Activated naive CD4-positive, alpha-beta T cell treated with anti-CD3 and anti-CD28 coated beads, Interleukin-2, amount 10 ng/mL, durations not matched to agents 7 days and 5 days (primary cell): ENCODE measurements at regions of chr9 and their contacts with region 1.

Region 1: DNA sequence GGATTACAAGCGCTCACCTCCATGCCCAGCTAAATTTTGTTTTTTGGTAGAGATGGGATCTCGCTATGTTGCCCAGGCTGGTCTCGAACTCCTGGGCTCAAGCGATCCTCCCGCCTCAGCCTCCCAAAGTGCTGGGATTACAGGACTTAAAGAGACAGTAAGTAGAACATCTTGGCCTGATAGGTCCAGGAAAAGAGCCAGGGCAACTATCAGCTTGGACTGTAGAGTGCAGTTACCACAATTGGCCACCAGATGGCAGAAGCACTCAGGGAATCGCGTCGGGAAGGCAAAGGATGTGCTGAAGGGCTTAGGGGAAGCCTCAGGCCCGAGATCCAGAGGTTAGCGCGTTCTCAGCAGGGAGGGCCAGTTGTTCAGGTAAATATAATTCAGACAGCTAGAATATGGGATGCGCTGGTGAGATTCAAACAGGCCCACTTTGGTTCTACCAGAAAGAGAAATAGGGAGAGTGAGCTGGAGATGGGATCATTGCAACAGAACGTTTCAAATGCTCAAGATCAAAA is 21.5 kb downstream of the C9orf57 start:
- DNase-seq: peak; percentile 72
- H3K4me3 Mint-ChIP-seq: no peak overlapping the region
- H3K27ac Mint-ChIP-seq: no peak overlapping the region
- H3K4me1 Mint-ChIP-seq: peaks cover 3% of the 10 kb centered on the region
- H3K27me3 Mint-ChIP-seq: peaks cover 28% of the 10 kb centered on the region

Region 2: DNA sequence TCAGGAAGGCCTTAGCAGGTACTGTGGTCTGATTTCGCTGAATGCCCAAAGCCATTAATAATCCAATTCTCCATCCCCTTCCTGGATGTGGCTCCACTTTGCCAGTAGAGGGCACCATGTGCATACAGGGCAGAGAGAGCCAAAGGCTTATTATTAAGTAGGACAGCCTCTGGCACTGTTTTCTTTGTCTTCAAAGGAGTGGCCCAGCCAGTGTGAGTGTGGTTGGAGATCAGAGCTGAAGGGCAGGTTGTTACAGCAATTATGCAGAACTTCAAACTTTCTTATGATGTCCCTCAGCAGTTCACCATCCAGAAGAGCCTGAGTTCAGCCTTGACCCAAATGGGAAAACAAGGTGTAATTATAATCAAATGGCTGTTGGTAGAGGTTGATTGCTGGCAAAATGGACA is 232.0 kb before region 1 on chr9:
- CTCF ChIA-PET with region 1: interaction called, 19 read pairs
- DNase-seq: peak; percentile 74
- H3K4me3 Mint-ChIP-seq: no peak overlapping the region
- H3K27ac Mint-ChIP-seq: no peak overlapping the region
- H3K4me1 Mint-ChIP-seq: peaks cover 6% of the 10 kb centered on the region
- H3K27me3 Mint-ChIP-seq: peaks cover 5% of the 10 kb centered on the region

Region 3: GRCh38 chr9:71835596-71835995 is 203.4 kb before region 1 on chr9:
- CTCF ChIA-PET with region 1: no interaction called
- DNase-seq: no peak
- H3K4me3 Mint-ChIP-seq: no peak overlapping the region
- H3K27ac Mint-ChIP-seq: no peak overlapping the region
- H3K4me1 Mint-ChIP-seq: peaks cover 4% of the 10 kb centered on the region
- H3K27me3 Mint-ChIP-seq: peaks cover 16% of the 10 kb centered on the region

Region 4: DNA sequence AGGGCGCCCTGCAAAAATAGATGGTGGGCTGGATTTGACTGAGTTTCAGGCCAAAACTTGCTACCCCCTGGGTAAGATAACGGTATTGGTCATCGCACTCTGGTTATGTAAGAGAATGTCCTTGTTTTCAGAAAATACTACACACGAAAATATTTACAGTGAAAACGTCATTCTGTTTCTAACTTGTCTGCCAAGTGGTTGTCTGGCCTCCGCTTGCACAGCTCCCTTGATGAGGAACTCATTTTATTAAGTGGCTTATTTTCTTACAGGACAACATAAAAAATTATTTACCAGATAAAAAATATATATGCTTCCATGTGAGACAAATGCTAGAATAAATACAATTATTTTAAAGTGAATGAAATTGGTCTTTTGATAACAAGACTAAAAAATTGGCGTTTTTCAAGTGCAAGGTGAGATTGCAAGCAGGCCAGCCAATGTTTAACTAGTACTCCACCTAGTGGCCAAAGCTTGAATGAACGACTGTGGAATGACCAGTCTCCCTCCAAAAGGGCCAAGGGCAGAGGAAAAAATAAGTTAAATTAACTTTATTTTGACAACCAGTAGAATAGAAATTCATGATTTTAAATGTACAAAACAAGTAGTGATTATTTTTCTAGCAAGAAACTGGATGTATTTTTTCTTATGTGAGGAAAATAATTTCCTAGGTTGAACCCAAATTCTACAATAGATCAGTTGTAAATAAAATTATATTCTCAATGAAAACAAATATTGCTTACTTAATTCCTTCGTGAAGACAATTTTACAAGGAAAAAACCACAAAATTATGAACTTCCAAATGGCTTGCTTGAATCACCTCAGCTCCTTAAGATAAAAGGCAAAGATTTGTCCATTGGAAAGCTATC is 232.9 kb after region 1 on chr9:
- CTCF ChIA-PET with region 1: interaction called, 79 read pairs
- DNase-seq: peak; percentile 57
- H3K4me3 Mint-ChIP-seq: no peak overlapping the region
- H3K27ac Mint-ChIP-seq: no peak overlapping the region
- H3K4me1 Mint-ChIP-seq: no peaks in the 10 kb centered on the region
- H3K27me3 Mint-ChIP-seq: peaks cover 11% of the 10 kb centered on the region

Region 5: DNA sequence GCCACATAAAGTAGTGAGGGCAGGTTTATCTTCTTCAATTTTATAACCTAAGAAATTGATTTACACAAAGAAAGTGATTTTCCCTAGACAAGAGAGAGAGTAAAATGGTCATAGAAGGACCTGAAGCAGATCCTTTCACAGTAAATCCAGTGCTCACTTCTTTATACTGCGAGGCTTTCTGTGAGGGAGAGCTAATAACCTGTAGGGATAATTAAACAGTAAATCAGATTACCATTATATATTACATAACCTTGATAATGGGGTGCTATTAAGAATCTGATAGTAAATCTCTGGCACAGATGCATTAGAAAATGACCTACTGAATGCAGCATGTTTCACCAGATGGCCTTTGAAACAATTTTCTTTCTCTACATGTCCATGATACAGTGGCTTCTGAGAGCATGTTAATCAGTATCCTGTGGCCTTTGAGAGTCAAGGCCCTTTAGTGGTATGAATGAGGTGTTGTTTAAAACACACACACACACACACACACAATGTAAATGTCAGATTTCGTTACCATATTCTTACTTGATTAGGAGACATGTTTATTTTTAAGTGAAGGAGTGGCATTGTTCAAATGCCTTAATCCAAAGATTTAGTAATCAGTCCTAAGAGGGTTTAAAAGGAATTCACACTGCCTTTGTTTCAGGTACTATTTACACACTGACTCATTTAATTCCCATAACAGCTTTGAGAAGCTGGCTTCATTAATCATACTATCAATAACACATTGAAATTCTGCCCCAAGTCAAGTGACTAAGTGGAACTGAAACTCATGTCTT is 789.2 kb after region 1 on chr9:
- CTCF ChIA-PET with region 1: interaction called, 11 read pairs
- DNase-seq: no peak
- H3K4me3 Mint-ChIP-seq: no peak overlapping the region
- H3K27ac Mint-ChIP-seq: no peak overlapping the region
- H3K4me1 Mint-ChIP-seq: no peaks in the 10 kb centered on the region
- H3K27me3 Mint-ChIP-seq: peaks cover 4% of the 10 kb centered on the region